Activated naive CD4-positive, alpha-beta T cell treated with anti-CD3 and anti-CD28 coated beads for 36 hours (primary cell): ENCODE measurements at regions of chr2 and their contacts with region 1.

Region 1: GRCh38 chr2:165440367-165440766 is 29.1 kb upstream of the CSRNP3 start:
- DNase-seq: no peak
- H3K4me3 Mint-ChIP-seq: no peak overlapping the region
- H3K27ac Mint-ChIP-seq: no peak overlapping the region
- H3K4me1 Mint-ChIP-seq: peaks cover 19% of the 10 kb centered on the region
- H3K27me3 Mint-ChIP-seq: no peaks in the 10 kb centered on the region

Region 2: DNA sequence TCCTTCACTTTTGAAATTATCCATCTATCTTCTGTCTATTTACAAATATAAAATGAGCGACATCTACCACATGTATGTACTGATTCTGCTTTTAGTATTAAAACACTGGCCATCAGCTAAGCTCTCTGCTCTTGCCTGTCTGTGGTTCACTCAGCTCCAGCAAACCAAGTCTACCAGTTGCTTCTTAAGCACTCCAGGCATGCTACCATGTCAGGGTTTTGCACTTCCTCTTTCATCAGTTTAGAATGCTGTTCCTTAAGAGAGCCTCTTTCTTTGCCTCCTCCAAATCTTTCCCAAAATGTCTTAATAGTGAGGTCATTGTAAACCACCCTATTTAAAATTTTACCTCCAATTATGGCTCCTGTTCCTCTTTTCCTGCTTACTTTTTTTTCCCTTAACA is 296.1 kb before region 1 on chr2:
- CTCF ChIA-PET with region 1: no interaction called
- intact Hi-C with region 1: no loop called
- DNase-seq: no peak
- H3K4me3 Mint-ChIP-seq: no peak overlapping the region
- H3K27ac Mint-ChIP-seq: no peak overlapping the region
- H3K4me1 Mint-ChIP-seq: no peaks in the 10 kb centered on the region
- H3K27me3 Mint-ChIP-seq: no peaks in the 10 kb centered on the region

Region 3: DNA sequence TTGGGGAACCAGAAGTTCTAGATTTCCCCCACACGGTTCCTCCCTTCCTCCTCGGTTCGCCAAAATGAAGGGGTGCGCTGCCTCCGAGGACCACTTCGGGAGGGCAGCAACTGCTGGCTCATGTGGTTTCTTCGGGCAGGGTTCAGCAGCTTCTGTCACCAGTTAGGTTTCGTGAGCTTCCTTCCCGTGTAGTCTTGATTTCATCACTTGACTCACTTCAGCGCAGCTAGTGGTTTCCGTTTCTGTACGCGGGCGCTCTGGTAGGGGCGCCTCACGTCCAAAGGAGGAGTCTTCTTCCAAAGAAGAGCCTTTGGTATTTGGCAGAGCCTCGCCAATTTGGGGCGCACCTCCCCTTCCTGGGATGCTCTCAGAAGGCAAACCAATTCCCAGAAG is 354.2 kb after region 1 on chr2:
- CTCF ChIA-PET with region 1: no interaction called
- intact Hi-C with region 1: loop called (anchors 5 kb)
- DNase-seq: peak; percentile 78
- H3K4me3 Mint-ChIP-seq: peak overlapping the region; percentile 82
- H3K27ac Mint-ChIP-seq: peak overlapping the region; percentile 78
- H3K4me1 Mint-ChIP-seq: peaks cover 15% of the 10 kb centered on the region
- H3K27me3 Mint-ChIP-seq: peaks cover 32% of the 10 kb centered on the region